Activated naive CD4-positive, alpha-beta T cell treated with anti-CD3 and anti-CD28 coated beads for 36 hours (primary cell): ENCODE measurements at regions of chr6 and their contacts with region 1.

Region 1: DNA sequence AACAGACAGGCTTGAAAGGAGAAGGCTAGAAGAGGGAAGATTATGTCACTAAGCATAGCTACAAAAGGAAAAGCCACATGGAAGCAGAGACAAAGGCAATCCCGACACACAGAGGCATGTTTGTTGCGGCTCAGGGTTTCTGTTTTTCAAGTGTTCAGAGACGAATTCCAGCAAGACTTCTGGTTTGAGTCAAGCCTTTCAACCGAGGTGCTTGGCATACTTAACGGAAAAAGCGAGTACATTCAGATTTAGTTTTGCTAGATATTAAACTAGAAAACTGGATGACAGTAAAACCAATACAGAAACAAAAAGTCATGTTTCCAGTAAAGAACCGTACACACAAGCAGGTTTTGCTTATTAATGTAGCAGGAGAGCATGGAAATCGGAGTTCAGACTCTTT is 27.2 kb downstream of the MCUR1 start:
- DNase-seq: peak; percentile 75
- H3K4me3 Mint-ChIP-seq: peak overlapping the region; percentile 14
- H3K27ac Mint-ChIP-seq: peak overlapping the region; percentile 79
- H3K4me1 Mint-ChIP-seq: peaks cover 34% of the 10 kb centered on the region
- H3K27me3 Mint-ChIP-seq: no peaks in the 10 kb centered on the region

Region 2: GRCh38 chr6:13407709-13408695 is 379.1 kb before region 1 on chr6:
- CTCF ChIA-PET with region 1: no interaction called
- intact Hi-C with region 1: no loop called
- DNase-seq: no peak
- H3K4me3 Mint-ChIP-seq: no peak overlapping the region
- H3K27ac Mint-ChIP-seq: no peak overlapping the region
- H3K4me1 Mint-ChIP-seq: no peaks in the 10 kb centered on the region
- H3K27me3 Mint-ChIP-seq: no peaks in the 10 kb centered on the region

Region 3: DNA sequence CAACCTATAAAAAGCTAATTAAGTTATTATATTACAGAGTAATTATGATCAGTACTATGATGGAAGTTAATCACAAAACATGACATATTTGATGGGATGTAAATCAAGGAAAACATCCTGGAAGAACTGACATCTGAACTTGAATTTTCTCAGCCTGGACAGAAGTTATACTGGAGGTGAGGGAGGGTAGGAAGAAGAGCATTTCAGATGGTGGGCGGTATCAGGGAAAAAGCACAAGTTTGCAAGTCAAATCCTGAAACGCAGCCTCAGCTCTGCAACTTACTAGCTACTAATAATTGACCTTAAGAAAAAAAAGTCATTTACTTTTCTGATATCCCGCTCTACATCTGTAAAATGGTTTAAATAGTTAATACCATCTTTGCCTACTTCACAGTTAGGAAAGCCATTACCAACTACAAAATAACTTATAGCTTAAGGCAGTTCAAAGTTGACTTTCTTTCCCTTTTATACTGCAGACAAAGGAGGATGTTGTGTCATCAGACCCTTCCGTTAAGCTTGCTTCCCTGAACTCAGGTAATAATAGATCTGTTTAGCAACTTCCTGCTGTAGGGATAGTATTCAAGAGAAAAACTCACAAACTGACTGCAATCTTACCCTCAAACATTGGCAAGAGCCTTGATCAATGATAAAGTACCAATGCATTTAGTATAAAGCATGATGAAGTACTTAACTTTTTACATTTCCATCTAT is 151.0 kb before region 1 on chr6:
- CTCF ChIA-PET with region 1: no interaction called
- intact Hi-C with region 1: loop called (anchors 5 kb)
- DNase-seq: no peak
- H3K4me3 Mint-ChIP-seq: peak overlapping the region; percentile 2
- H3K27ac Mint-ChIP-seq: peak overlapping the region; percentile 84
- H3K4me1 Mint-ChIP-seq: peaks cover 60% of the 10 kb centered on the region
- H3K27me3 Mint-ChIP-seq: no peaks in the 10 kb centered on the region

Region 4: GRCh38 chr6:13725570-13725969 is 61.6 kb before region 1 on chr6:
- CTCF ChIA-PET with region 1: interaction called, 4 read pairs
- intact Hi-C with region 1: loop called (anchors 1 kb)
- DNase-seq: peak; percentile 62
- H3K4me3 Mint-ChIP-seq: no peak overlapping the region
- H3K27ac Mint-ChIP-seq: peak overlapping the region; percentile 80
- H3K4me1 Mint-ChIP-seq: peaks cover 38% of the 10 kb centered on the region
- H3K27me3 Mint-ChIP-seq: no peaks in the 10 kb centered on the region

Region 5: DNA sequence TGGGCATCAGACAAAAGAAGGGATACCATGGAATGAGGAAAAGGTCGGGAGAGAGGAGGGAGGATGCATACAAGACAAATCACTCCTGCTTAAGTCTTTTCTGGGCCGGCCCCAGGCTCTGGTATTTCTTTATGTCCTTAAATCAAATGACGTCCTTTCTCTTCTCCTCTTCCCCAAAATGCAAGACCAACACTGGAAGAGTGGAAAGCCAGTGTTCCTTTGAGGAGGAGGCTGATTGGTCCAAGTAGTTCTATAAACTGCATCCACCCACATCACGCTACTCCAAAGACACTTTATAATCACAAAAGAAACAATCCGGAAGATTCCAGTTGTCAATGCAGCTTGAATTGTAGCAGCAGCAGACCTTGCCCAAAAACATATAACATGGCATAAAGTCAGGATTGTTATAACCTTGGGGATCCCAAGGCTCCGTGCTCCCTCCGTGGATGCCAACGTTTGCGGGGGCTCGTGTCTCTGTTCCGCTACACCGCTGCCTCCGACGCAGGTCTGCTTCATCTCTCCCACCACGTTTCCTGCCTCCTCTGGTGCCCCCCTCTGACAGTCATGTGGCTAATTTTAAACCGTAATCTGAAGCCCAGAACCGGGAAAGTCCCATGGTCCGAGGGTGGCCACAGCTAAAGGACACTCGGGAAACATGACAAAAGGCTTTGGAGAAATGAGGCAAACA is 19.9 kb before region 1 on chr6:
- CTCF ChIA-PET with region 1: interaction called, 12 read pairs
- intact Hi-C with region 1: loop called (anchors 1 kb)
- DNase-seq: peak; percentile 71
- H3K4me3 Mint-ChIP-seq: peak overlapping the region; percentile 78
- H3K27ac Mint-ChIP-seq: no peak overlapping the region
- H3K4me1 Mint-ChIP-seq: peaks cover 43% of the 10 kb centered on the region
- H3K27me3 Mint-ChIP-seq: peaks cover 1% of the 10 kb centered on the region

Region 6: GRCh38 chr6:14117158-14118090 is 330.3 kb after region 1 on chr6 and contains the start of gene CD83:
- CTCF ChIA-PET with region 1: no interaction called
- intact Hi-C with region 1: loop called (anchors 5 kb)
- DNase-seq: peak; percentile 75
- H3K4me3 Mint-ChIP-seq: peak within 1 kb of the TSS; percentile 93
- H3K27ac Mint-ChIP-seq: peak within 1 kb of the TSS; percentile 87
- H3K4me1 Mint-ChIP-seq: peaks cover 36% of the 10 kb centered on the region
- H3K27me3 Mint-ChIP-seq: peaks cover 2% of the 10 kb centered on the region
- total RNA-seq, gene CD83: 11.9 to 13.8 TPM